Posterior cingulate gyrus (tissue), 11 donors: ENCODE measurements at regions of chr11 and their contacts with region 1.

Region 1: GRCh38 chr11:130124096-130124495 is 35.5 kb upstream of the ST14 start:
- DNase-seq: peak in 2 of 10 donors; percentile 30 to 86

Region 2: GRCh38 chr11:130069684-130070108 is 54.4 kb before region 1 on chr11 and contains the start of gene APLP2:
- intact Hi-C with region 1: loop called (anchors 10 kb)
- DNase-seq: peak; percentile 98 to 100 (median 99)